ENCODE measurements at regions of chr17 and their contacts with region 1.

Region 1: GRCh38 chr17:60720763-60721531 is 43.3 kb downstream of the BCAS3 start:
- DNase-seq: no peak
- ATAC-seq: peak; percentile 75
- H3K4me3 ChIP-seq: no peak overlapping the region
- H3K27ac ChIP-seq: no peak overlapping the region
- H3K4me1 ChIP-seq: no peaks in the 10 kb centered on the region
- H3K27me3 ChIP-seq: no peaks in the 10 kb centered on the region

Region 2: GRCh38 chr17:60610473-60610872 is 110.5 kb before region 1 on chr17:
- intact Hi-C with region 1: no loop called
- DNase-seq: no peak
- ATAC-seq: no peak
- H3K4me3 ChIP-seq: no peak overlapping the region
- H3K27ac ChIP-seq: no peak overlapping the region
- H3K4me1 ChIP-seq: peaks cover 0 to 5% of the 10 kb centered on the region in 2 donors
- H3K27me3 ChIP-seq: no peaks in the 10 kb centered on the region

Region 3: GRCh38 chr17:60754057-60754604 is 33.2 kb after region 1 on chr17:
- intact Hi-C with region 1: no loop called
- DNase-seq: no peak
- ATAC-seq: no peak
- H3K4me3 ChIP-seq: no peak overlapping the region
- H3K27ac ChIP-seq: no peak overlapping the region
- H3K4me1 ChIP-seq: no peaks in the 10 kb centered on the region
- H3K27me3 ChIP-seq: no peaks in the 10 kb centered on the region

Region 4: DNA sequence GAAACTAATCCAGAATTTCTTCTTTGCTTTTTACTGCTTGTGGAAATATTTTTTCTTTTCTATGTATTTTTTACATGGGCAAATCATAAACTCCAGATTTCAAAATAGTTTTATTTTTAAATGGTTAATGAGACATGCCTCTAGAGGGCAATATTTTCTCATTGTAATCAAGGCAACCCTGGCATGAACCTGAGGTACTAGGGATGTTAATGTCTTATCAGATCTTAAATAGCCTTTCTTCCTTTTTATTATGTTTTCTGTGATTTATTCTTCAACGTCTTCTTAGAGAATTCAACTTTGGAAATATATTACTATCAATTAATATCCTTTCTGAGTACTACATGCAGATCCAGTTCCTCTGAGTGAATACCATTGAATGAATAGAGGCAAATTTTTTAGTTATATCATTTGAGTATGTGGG is 281.4 kb after region 1 on chr17:
- intact Hi-C with region 1: loop called (anchors 5 to 10 kb)
- DNase-seq: no peak
- ATAC-seq: no peak
- H3K4me3 ChIP-seq: no peak overlapping the region
- H3K27ac ChIP-seq: no peak overlapping the region
- H3K4me1 ChIP-seq: no peaks in the 10 kb centered on the region
- H3K27me3 ChIP-seq: no peaks in the 10 kb centered on the region

Region 5: DNA sequence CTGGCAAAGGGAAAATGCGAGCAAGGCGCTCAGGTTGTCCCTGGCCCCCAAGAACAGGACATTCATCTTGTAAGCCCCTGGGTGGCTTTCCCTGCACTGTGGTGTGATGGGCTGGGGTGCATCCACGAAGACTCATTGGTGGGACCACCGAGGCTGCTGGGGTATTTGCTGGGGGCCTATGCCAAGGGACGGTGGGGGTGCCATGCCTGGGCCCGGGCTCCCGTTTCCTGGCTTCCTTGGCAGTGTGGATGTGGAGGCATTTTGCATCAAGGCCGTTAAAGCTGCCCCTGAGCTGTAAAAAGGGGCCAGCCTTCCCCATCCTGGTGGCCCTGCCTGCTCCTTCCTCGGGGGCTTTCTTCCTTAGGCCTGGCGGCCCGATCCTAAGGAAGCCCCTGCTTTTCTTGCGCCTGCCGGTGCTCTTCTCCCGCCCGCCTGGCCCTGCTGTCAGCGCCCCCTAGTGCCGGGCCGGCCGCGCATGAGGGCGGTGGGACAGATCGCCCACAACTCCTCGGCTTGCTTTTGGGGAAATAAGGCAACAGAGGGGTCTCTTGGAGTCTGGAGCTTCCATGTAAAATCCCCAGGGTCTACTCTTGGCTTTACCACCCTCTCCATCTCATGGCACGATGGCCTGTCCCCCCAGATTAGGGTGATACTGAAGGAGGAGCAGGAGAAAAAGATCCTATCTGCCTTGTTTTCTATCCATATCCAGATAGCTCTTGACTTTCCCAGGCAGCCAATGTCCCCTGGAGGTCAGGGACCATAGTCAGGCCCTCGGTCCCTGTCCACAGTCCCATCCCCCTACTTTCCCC is 668.9 kb after region 1 on chr17:
- intact Hi-C with region 1: loop called in 1 of 2 experiments (anchors 10 kb)
- DNase-seq: peak; percentile 66 to 88
- ATAC-seq: peak; percentile 63
- H3K4me3 ChIP-seq: no peak overlapping the region
- H3K27ac ChIP-seq: no peak overlapping the region
- H3K4me1 ChIP-seq: no peaks in the 10 kb centered on the region
- H3K27me3 ChIP-seq: no peaks in the 10 kb centered on the region

Region 6: DNA sequence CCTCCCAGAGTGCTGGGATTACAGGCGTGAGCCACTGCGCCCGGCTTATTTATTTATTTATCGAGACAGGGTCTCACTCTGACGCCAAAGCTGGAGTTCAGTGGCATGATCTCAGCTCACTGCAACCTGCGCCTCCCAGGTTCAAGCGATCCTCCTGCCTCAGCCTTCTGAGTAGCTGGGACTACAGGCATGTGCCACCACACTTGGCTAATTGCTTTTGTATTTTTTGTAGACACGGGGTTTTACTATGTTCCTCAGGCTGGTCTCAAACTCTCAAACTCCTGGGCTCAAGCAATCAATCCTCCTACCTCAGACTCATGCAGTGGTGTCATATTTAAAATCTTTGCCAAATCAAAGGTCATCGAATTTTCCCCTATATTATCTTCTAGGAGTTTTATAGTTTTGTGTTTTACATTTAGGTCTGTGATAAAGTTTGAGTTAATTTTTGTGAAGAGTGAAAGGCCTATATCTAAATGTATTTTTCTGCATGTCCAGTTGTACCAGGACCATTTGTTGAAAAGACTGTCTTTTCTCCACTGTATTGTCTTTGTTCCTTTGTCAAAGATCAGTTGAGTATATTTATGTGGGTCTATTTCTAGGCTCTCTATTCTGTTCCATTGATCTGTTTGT is 823.0 kb after region 1 on chr17:
- intact Hi-C with region 1: loop called in 1 of 2 experiments (anchors 10 kb)
- DNase-seq: no peak
- ATAC-seq: no peak
- H3K4me3 ChIP-seq: no peak overlapping the region
- H3K27ac ChIP-seq: no peak overlapping the region
- H3K4me1 ChIP-seq: no peaks in the 10 kb centered on the region
- H3K27me3 ChIP-seq: no peaks in the 10 kb centered on the region